Caco-2 (cell line): ENCODE measurements at regions of chr20 and their contacts with region 1.

Region 1: GRCh38 chr20:10553326-10553984 is 118.3 kb downstream of the SLX4IP start:
- DNase-seq: peak; percentile 74 to 76
- H3K4me3 ChIP-seq: no peak overlapping the region
- H3K4me3 Mint-ChIP-seq: no peak overlapping the region
- H3K27ac Mint-ChIP-seq: no peak overlapping the region
- H3K4me1 ChIP-seq: peaks cover 31% of the 10 kb centered on the region
- H3K4me1 Mint-ChIP-seq: peaks cover 50% of the 10 kb centered on the region
- H3K27me3 ChIP-seq: no peaks in the 10 kb centered on the region
- H3K27me3 Mint-ChIP-seq: no peaks in the 10 kb centered on the region
- CTCF ChIP-seq: peak; percentile 76 to 85

Region 2: GRCh38 chr20:10218536-10219451 is 334.7 kb before region 1 on chr20 and contains the start of gene SNAP25:
- CTCF ChIA-PET with region 1: no interaction called
- POLR2A ChIA-PET with region 1: no interaction called
- intact Hi-C with region 1: no loop called
- DNase-seq: peak; percentile 42 to 70
- H3K4me3 ChIP-seq: no peak within 1 kb of the TSS
- H3K4me3 Mint-ChIP-seq: peak within 1 kb of the TSS; percentile 25
- H3K27ac Mint-ChIP-seq: no peak within 1 kb of the TSS
- H3K4me1 ChIP-seq: no peaks in the 10 kb centered on the region
- H3K4me1 Mint-ChIP-seq: no peaks in the 10 kb centered on the region
- H3K27me3 ChIP-seq: no peaks in the 10 kb centered on the region
- H3K27me3 Mint-ChIP-seq: peaks cover 15% of the 10 kb centered on the region
- CTCF ChIP-seq: no peak
- total RNA-seq, gene SNAP25: not detected in 2 replicates

Region 3: GRCh38 chr20:10476319-10476724 is 77.1 kb before region 1 on chr20:
- CTCF ChIA-PET with region 1: no interaction called
- POLR2A ChIA-PET with region 1: no interaction called
- intact Hi-C with region 1: no loop called
- DNase-seq: no peak
- H3K4me3 ChIP-seq: no peak overlapping the region
- H3K4me3 Mint-ChIP-seq: no peak overlapping the region
- H3K27ac Mint-ChIP-seq: no peak overlapping the region
- H3K4me1 ChIP-seq: no peaks in the 10 kb centered on the region
- H3K4me1 Mint-ChIP-seq: peaks cover 4% of the 10 kb centered on the region
- H3K27me3 ChIP-seq: no peaks in the 10 kb centered on the region
- H3K27me3 Mint-ChIP-seq: no peaks in the 10 kb centered on the region
- CTCF ChIP-seq: no peak

Region 4: GRCh38 chr20:10524011-10524476 is 29.4 kb before region 1 on chr20:
- CTCF ChIA-PET with region 1: no interaction called
- POLR2A ChIA-PET with region 1: no interaction called
- intact Hi-C with region 1: no loop called
- DNase-seq: no peak
- H3K4me3 ChIP-seq: no peak overlapping the region
- H3K4me3 Mint-ChIP-seq: no peak overlapping the region
- H3K27ac Mint-ChIP-seq: no peak overlapping the region
- H3K4me1 ChIP-seq: no peaks in the 10 kb centered on the region
- H3K4me1 Mint-ChIP-seq: no peaks in the 10 kb centered on the region
- H3K27me3 ChIP-seq: no peaks in the 10 kb centered on the region
- H3K27me3 Mint-ChIP-seq: no peaks in the 10 kb centered on the region
- CTCF ChIP-seq: no peak

Region 5: GRCh38 chr20:10636326-10636818 is 82.9 kb after region 1 on chr20:
- CTCF ChIA-PET with region 1: no interaction called
- POLR2A ChIA-PET with region 1: no interaction called
- intact Hi-C with region 1: loop called (anchors 2 kb)
- DNase-seq: no peak
- H3K4me3 ChIP-seq: no peak overlapping the region
- H3K4me3 Mint-ChIP-seq: no peak overlapping the region
- H3K27ac Mint-ChIP-seq: no peak overlapping the region
- H3K4me1 ChIP-seq: 0 out of 2 replicates have a peak, but pooled peaks cover 10% of the 10 kb centered on the region
- H3K4me1 Mint-ChIP-seq: peaks cover 11% of the 10 kb centered on the region
- H3K27me3 ChIP-seq: no peaks in the 10 kb centered on the region
- H3K27me3 Mint-ChIP-seq: no peaks in the 10 kb centered on the region
- CTCF ChIP-seq: no peak

Region 6: GRCh38 chr20:10857352-10858070 is 304.1 kb after region 1 on chr20:
- CTCF ChIA-PET with region 1: no interaction called
- POLR2A ChIA-PET with region 1: no interaction called
- intact Hi-C with region 1: loop called (anchors 10 kb)
- DNase-seq: peak; percentile 33 to 56
- H3K4me3 ChIP-seq: no peak overlapping the region
- H3K4me3 Mint-ChIP-seq: no peak overlapping the region
- H3K27ac Mint-ChIP-seq: peak overlapping the region; percentile 71
- H3K4me1 ChIP-seq: peaks cover 59% of the 10 kb centered on the region
- H3K4me1 Mint-ChIP-seq: peaks cover 25% of the 10 kb centered on the region
- H3K27me3 ChIP-seq: no peaks in the 10 kb centered on the region
- H3K27me3 Mint-ChIP-seq: no peaks in the 10 kb centered on the region
- CTCF ChIP-seq: no peak

Region 7: GRCh38 chr20:10954137-10954840 is 400.8 kb after region 1 on chr20:
- CTCF ChIA-PET with region 1: no interaction called
- POLR2A ChIA-PET with region 1: interaction called, 4 read pairs
- intact Hi-C with region 1: loop called (anchors 10 kb)
- DNase-seq: no peak
- H3K4me3 ChIP-seq: no peak overlapping the region
- H3K4me3 Mint-ChIP-seq: no peak overlapping the region
- H3K27ac Mint-ChIP-seq: no peak overlapping the region
- H3K4me1 ChIP-seq: peaks cover 50% of the 10 kb centered on the region
- H3K4me1 Mint-ChIP-seq: peaks cover 31% of the 10 kb centered on the region
- H3K27me3 ChIP-seq: no peaks in the 10 kb centered on the region
- H3K27me3 Mint-ChIP-seq: no peaks in the 10 kb centered on the region
- CTCF ChIP-seq: no peak

Region 8: GRCh38 chr20:11047559-11047958 is 494.1 kb after region 1 on chr20:
- CTCF ChIA-PET with region 1: no interaction called
- POLR2A ChIA-PET with region 1: no interaction called
- intact Hi-C with region 1: loop called (anchors 10 kb)
- DNase-seq: peak; percentile 41 to 74
- H3K4me3 ChIP-seq: no peak overlapping the region
- H3K4me3 Mint-ChIP-seq: no peak overlapping the region
- H3K27ac Mint-ChIP-seq: no peak overlapping the region
- H3K4me1 ChIP-seq: peaks cover 50% of the 10 kb centered on the region
- H3K4me1 Mint-ChIP-seq: peaks cover 23% of the 10 kb centered on the region
- H3K27me3 ChIP-seq: no peaks in the 10 kb centered on the region
- H3K27me3 Mint-ChIP-seq: no peaks in the 10 kb centered on the region
- CTCF ChIP-seq: no peak

Region 9: GRCh38 chr20:11204926-11205768 is 651.7 kb after region 1 on chr20:
- CTCF ChIA-PET with region 1: no interaction called
- POLR2A ChIA-PET with region 1: no interaction called
- intact Hi-C with region 1: loop called (anchors 1 kb)
- DNase-seq: peak; percentile 75 to 76
- H3K4me3 ChIP-seq: no peak overlapping the region
- H3K4me3 Mint-ChIP-seq: no peak overlapping the region
- H3K27ac Mint-ChIP-seq: peak overlapping the region; percentile 10
- H3K4me1 ChIP-seq: peaks cover 38% of the 10 kb centered on the region
- H3K4me1 Mint-ChIP-seq: peaks cover 20% of the 10 kb centered on the region
- H3K27me3 ChIP-seq: no peaks in the 10 kb centered on the region
- H3K27me3 Mint-ChIP-seq: no peaks in the 10 kb centered on the region
- CTCF ChIP-seq: peak; percentile 75 to 94

Region 10: GRCh38 chr20:11274141-11274594 is 720.7 kb after region 1 on chr20:
- CTCF ChIA-PET with region 1: no interaction called
- POLR2A ChIA-PET with region 1: no interaction called
- intact Hi-C with region 1: loop called (anchors 1 kb)
- DNase-seq: peak; percentile 61 to 63
- H3K4me3 ChIP-seq: no peak overlapping the region
- H3K4me3 Mint-ChIP-seq: no peak overlapping the region
- H3K27ac Mint-ChIP-seq: no peak overlapping the region
- H3K4me1 ChIP-seq: peaks cover 21% of the 10 kb centered on the region
- H3K4me1 Mint-ChIP-seq: peaks cover 18% of the 10 kb centered on the region
- H3K27me3 ChIP-seq: no peaks in the 10 kb centered on the region
- H3K27me3 Mint-ChIP-seq: no peaks in the 10 kb centered on the region
- CTCF ChIP-seq: peak; percentile 73 to 77